ENCODE measurements at regions of chr7 and their contacts with region 1.

Region 1: DNA sequence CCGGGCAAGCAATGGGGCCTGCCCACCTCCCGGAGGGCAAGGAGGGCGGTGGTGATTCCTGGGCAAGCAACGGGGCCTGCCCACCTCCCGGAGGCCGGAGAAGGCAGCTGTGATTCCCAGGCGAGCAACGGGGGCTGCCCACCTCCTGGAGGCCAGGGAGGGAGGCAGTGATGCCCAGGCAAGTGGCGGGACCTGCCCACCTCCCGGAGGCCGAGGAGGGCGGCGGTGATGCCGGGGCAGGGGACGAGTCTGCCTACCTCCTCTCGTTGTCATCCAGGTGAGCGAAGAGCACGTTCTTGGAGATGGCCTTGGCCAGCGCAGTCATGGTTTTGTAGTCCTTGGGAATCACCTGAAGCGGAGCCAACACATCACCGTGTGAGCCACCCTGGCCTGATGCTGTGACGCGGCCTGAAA is 49.5 kb upstream of the DNAAF5 start:
- DNase-seq: no peak
- H3K4me3 ChIP-seq: no peak overlapping the region
- H3K27ac ChIP-seq: no peak overlapping the region
- H3K4me1 ChIP-seq: no peaks in the 10 kb centered on the region
- H3K27me3 ChIP-seq: no peaks in the 10 kb centered on the region
- CTCF ChIP-seq: no peak
- POLR2A ChIP-seq: no peak

Region 2: DNA sequence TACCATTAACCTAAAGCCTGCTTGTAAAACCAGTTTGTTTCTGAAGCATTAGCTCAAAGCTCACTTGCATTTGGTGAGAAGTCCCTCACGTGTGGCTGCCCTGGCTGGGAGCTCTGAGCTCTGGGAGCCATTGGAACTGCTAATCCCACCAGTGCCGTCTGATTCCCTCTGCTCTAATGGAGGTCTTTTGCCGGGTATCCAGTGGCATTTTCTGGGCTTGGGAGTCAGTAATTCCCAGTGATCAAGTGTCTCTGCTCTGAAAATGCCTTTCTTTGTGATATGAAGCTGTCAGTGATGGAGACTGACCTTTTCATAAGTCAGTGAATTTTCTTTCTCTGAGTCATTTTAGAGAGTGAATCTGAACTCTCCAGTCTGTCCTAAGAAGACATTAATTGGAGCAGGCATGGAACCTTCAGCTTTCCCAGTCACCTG is 521.5 kb before region 1 on chr7:
- intact Hi-C with region 1: no loop called
- DNase-seq: no peak
- H3K4me3 ChIP-seq: no peak overlapping the region
- H3K27ac ChIP-seq: no peak overlapping the region
- H3K4me1 ChIP-seq: no peaks in the 10 kb centered on the region
- H3K27me3 ChIP-seq: no peaks in the 10 kb centered on the region
- CTCF ChIP-seq: no peak
- POLR2A ChIP-seq: no peak

Region 3: DNA sequence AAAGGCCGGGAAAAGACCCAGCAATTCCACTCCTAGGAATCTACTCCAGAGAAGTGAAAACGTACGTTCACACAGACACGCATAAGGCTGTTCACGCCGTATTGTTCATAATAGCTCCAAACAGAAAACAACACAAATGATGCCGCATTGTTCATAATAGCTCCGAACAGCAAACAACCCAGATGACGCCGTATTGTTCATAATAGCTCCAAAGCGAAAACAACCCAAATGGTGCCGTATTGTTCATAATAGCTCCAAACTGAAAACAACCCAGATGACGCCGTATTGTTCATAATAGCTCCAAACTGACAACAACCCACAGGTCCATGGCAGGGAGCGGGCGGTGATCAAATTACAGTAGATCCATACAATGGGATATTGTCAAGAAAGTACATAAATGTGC is 35.7 kb before region 1 on chr7:
- intact Hi-C with region 1: no loop called
- DNase-seq: no peak
- H3K4me3 ChIP-seq: no peak overlapping the region
- H3K27ac ChIP-seq: no peak overlapping the region
- H3K4me1 ChIP-seq: no peaks in the 10 kb centered on the region
- H3K27me3 ChIP-seq: no peaks in the 10 kb centered on the region
- CTCF ChIP-seq: no peak
- POLR2A ChIP-seq: no peak

Region 4: GRCh38 chr7:716222-716621 is 39.2 kb after region 1 on chr7:
- intact Hi-C with region 1: loop called (anchors 1 kb)
- DNase-seq: peak in 1 of 2 donors; percentile 25
- H3K4me3 ChIP-seq: no peak overlapping the region
- H3K27ac ChIP-seq: no peak overlapping the region
- H3K4me1 ChIP-seq: no peaks in the 10 kb centered on the region
- H3K27me3 ChIP-seq: no peaks in the 10 kb centered on the region
- CTCF ChIP-seq: no peak
- POLR2A ChIP-seq: no peak

Region 5: GRCh38 chr7:1432411-1433082 is 755.6 kb after region 1 on chr7:
- intact Hi-C with region 1: no loop called
- DNase-seq: peak in 1 of 2 donors; percentile 74
- H3K4me3 ChIP-seq: no peak overlapping the region
- H3K27ac ChIP-seq: no peak overlapping the region
- H3K4me1 ChIP-seq: no peaks in the 10 kb centered on the region
- H3K27me3 ChIP-seq: peaks cover 9 to 33% of the 10 kb centered on the region in 2 donors
- CTCF ChIP-seq: peak; percentile 85 to 87 (median 87)
- POLR2A ChIP-seq: no peak